Endothelial cell of umbilical vein (primary cell): ENCODE measurements at regions of chr13 and their contacts with region 1.

Region 1: DNA sequence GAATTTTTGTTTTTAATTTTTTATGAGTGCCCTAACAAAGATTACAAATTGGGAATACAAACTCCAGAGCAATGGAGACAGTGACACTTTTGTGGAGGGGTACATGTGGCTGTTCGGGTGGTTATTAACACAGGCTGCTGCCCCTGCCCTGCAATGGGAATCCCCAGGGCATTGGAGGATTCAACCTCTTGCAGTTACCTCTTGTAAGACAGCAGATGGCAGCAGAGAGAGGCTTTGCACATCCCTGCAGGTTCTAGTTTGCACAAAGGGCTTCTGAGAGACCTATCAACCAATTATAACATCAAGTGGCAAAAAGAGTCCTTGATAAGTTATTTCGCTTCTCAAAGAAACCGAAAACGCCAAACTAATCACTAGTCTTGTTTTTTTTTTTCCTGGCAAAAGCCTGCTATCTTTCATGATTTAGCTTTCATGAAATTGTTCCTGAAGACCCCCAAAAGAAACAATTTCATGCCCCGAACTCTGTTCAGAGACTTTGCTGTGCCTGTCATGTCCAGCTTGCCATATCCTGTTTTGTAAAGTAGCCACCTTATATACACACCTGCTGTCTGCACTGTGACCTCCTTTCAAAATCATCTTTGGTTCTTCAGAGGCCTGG is 10.4 kb downstream of the GJB2 start:
- DNase-seq: peak; percentile 68
- H3K4me3 ChIP-seq: no peak overlapping the region
- H3K27ac ChIP-seq: no peak overlapping the region
- H3K4me1 ChIP-seq: no peaks in the 10 kb centered on the region
- H3K27me3 ChIP-seq: peaks cover 28 to 45% of the 10 kb centered on the region in 2 experiments
- CTCF ChIP-seq: peak; percentile 74 to 78
- POLR2A ChIP-seq: no peak

Region 2: GRCh38 chr13:20043207-20043925 is 139.0 kb before region 1 on chr13:
- CTCF ChIA-PET with region 1: no interaction called
- POLR2A ChIA-PET with region 1: no interaction called
- dilution Hi-C with region 1: no loop called
- intact Hi-C with region 1: no loop called
- DNase-seq: no peak
- H3K4me3 ChIP-seq: no peak overlapping the region
- H3K27ac ChIP-seq: no peak overlapping the region
- H3K4me1 ChIP-seq: no peaks in the 10 kb centered on the region
- H3K27me3 ChIP-seq: no peaks in the 10 kb centered on the region
- CTCF ChIP-seq: no peak
- POLR2A ChIP-seq: no peak

Region 3: GRCh38 chr13:20489185-20489820 is 307.0 kb after region 1 on chr13:
- CTCF ChIA-PET with region 1: interaction called, 6 read pairs
- POLR2A ChIA-PET with region 1: no interaction called
- dilution Hi-C with region 1: no loop called
- intact Hi-C with region 1: loop called (anchors 1 kb)
- DNase-seq: no peak
- H3K4me3 ChIP-seq: no peak overlapping the region
- H3K27ac ChIP-seq: no peak overlapping the region
- H3K4me1 ChIP-seq: no peaks in the 10 kb centered on the region
- H3K27me3 ChIP-seq: no peaks in the 10 kb centered on the region
- CTCF ChIP-seq: no peak
- POLR2A ChIP-seq: no peak

Region 4: GRCh38 chr13:20902438-20903163 is 720.3 kb after region 1 on chr13 and contains the start of gene XPO4:
- CTCF ChIA-PET with region 1: no interaction called
- POLR2A ChIA-PET with region 1: no interaction called
- dilution Hi-C with region 1: no loop called
- intact Hi-C with region 1: no loop called
- DNase-seq: peak; percentile 81
- H3K4me3 ChIP-seq: peak within 1 kb of the TSS; percentile 60 to 100 (median 86)
- H3K27ac ChIP-seq: peak within 1 kb of the TSS; percentile 65
- H3K4me1 ChIP-seq: peaks cover 12% of the 10 kb centered on the region
- H3K27me3 ChIP-seq: no peaks in the 10 kb centered on the region
- CTCF ChIP-seq: no peak
- POLR2A ChIP-seq: peak; percentile 83
- total RNA-seq, gene XPO4: 21.3 and 22.5 TPM in 2 replicates